ENCODE measurements at regions of chr11 and their contacts with region 1.

Region 1: GRCh38 chr11:12043959-12044819 is 35.8 kb upstream of the DKK3 start:
- DNase-seq: peak; percentile 85 to 93
- ATAC-seq: peak; percentile 94
- H3K4me3 ChIP-seq: no peak overlapping the region
- H3K27ac ChIP-seq: peak overlapping the region in 1 of 2 donors; percentile 60
- H3K4me1 ChIP-seq: no peaks in the 10 kb centered on the region
- H3K27me3 ChIP-seq: no peaks in the 10 kb centered on the region

Region 2: GRCh38 chr11:11701070-11701469 is 343.1 kb before region 1 on chr11:
- intact Hi-C with region 1: no loop called
- DNase-seq: no peak
- ATAC-seq: no peak
- H3K4me3 ChIP-seq: no peak overlapping the region
- H3K27ac ChIP-seq: no peak overlapping the region
- H3K4me1 ChIP-seq: no peaks in the 10 kb centered on the region
- H3K27me3 ChIP-seq: peaks cover 0 to 1% of the 10 kb centered on the region in 2 donors

Region 3: GRCh38 chr11:11798586-11799438 is 245.4 kb before region 1 on chr11:
- intact Hi-C with region 1: loop called (anchors 2 to 10 kb)
- DNase-seq: peak; percentile 78 to 95
- ATAC-seq: peak; percentile 91
- H3K4me3 ChIP-seq: no peak overlapping the region
- H3K27ac ChIP-seq: no peak overlapping the region
- H3K4me1 ChIP-seq: no peaks in the 10 kb centered on the region
- H3K27me3 ChIP-seq: no peaks in the 10 kb centered on the region

Region 4: GRCh38 chr11:11806586-11806985 is 237.6 kb before region 1 on chr11:
- intact Hi-C with region 1: loop called in 1 of 2 experiments (anchors 10 kb)
- DNase-seq: no peak
- ATAC-seq: no peak
- H3K4me3 ChIP-seq: no peak overlapping the region
- H3K27ac ChIP-seq: no peak overlapping the region
- H3K4me1 ChIP-seq: no peaks in the 10 kb centered on the region
- H3K27me3 ChIP-seq: no peaks in the 10 kb centered on the region

Region 5: DNA sequence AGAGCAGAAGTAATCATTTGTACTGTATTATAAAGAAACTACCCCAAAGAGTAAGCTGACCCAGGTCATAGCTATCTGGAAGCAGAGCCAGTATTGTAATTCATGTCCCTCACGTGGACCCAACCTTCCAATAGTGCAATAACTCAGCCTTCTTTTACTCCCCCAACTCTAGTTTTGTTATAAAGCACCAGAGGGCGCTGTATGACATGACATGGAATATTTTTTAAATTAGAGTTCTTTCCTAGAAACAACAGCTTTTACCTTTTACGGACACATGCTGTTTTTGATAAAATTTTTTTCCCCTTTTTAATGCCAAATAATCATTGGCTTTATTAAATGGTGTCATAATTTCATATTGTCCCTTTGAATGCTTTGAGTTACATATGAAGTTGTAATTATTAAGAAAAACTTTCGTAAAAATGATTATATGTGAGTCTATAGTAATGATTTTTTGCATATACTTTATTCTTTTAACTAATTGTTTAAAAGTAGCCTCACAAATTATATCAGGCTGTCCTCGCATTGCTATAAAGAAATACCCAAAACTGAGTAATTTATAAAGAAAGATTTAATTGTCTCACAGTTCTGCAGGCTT is 112.6 kb before region 1 on chr11:
- intact Hi-C with region 1: loop called (anchors 1 to 2 kb)
- DNase-seq: no peak
- ATAC-seq: no peak
- H3K4me3 ChIP-seq: no peak overlapping the region
- H3K27ac ChIP-seq: no peak overlapping the region
- H3K4me1 ChIP-seq: no peaks in the 10 kb centered on the region
- H3K27me3 ChIP-seq: no peaks in the 10 kb centered on the region

Region 6: GRCh38 chr11:11977206-11977938 is 66.8 kb before region 1 on chr11:
- intact Hi-C with region 1: loop called in 1 of 2 experiments (anchors 5 kb)
- DNase-seq: peak; percentile 87 to 91
- ATAC-seq: peak; percentile 36
- H3K4me3 ChIP-seq: no peak overlapping the region
- H3K27ac ChIP-seq: peak overlapping the region; percentile 57 to 83
- H3K4me1 ChIP-seq: peaks cover 0 to 16% of the 10 kb centered on the region in 2 donors
- H3K27me3 ChIP-seq: no peaks in the 10 kb centered on the region